ENCODE measurements at regions of chr1 and their contacts with region 1.

Region 1: GRCh38 chr1:170685166-170685565 is 21.2 kb downstream of the PRRX1 start:
- DNase-seq: no peak
- ATAC-seq: no peak
- H3K4me3 ChIP-seq: no peak overlapping the region
- H3K27ac ChIP-seq: no peak overlapping the region
- H3K4me1 ChIP-seq: peaks cover 5% of the 10 kb centered on the region; the same call in 1 of the 2 replicates
- H3K27me3 ChIP-seq: no peaks in the 10 kb centered on the region
- CTCF ChIP-seq: no peak

Region 2: DNA sequence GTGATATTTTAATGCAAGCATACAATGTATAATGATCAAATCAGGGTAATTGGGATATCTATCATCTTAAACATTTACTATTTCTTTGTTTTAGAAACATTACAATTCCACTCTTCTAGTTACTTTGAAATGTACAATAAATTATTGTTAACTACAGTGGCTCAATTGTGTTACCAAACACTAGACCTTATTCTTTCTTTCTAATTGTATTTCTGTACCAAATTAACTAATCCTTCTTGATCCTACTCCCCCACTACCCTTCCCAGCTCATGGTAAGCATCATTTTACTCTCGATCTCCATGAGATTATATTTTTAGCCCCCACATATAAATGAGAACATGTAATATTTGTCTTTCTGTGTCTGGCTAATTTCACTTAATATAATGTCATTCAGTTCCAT is 155.2 kb after region 1 on chr1:
- CTCF ChIA-PET with region 1: no interaction called
- POLR2A ChIA-PET with region 1: no interaction called
- in situ Hi-C with region 1: no loop called
- intact Hi-C with region 1: no loop called
- DNase-seq: no peak
- ATAC-seq: no peak
- H3K4me3 ChIP-seq: no peak overlapping the region
- H3K27ac ChIP-seq: no peak overlapping the region
- H3K4me1 ChIP-seq: no peaks in the 10 kb centered on the region
- H3K27me3 ChIP-seq: no peaks in the 10 kb centered on the region
- CTCF ChIP-seq: no peak

Region 3: DNA sequence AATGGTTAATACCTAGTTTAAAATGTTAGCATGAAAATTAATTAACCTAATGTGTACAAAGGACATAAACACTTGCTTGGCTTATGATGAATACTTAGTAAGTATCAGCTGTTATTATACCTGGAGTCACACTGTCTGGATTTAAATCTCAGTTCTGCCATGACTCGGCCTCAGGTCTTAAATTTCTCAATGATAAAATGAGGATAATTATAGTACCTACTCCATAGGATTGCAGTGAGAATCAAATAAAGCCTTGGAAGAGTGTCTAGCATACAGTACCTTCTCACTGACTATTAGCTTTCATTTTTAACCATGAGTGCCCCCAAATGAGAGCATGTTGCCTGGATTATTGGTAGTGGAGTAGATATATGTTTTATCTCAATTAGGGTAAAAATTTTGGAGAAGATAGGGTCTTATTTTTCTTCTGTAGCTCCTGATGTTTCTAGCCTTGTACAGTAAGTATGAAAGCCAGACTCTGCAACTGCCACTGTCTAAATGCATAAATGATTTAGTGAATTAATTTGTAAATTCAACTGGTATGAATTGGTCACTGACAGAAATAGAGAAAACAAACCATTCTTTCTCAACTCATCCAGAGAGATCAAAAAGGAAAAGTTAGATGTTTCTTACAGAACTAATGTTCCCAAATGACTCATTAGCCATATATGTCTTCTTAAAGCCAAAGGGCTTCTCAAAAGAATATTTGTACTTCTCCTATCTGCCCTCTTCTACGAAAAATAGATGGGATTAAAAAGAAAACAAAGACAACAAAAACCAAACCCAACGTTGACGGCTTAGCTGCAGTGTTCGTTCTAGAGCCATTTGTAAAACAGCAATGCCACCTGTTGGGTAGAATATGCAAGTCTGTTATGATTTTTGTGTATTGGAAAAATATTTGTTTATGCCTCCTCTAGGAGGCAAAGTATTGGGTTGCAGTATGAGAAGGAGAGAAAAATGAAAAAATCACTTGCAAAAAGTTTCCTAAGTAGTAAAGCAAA is 196.4 kb after region 1 on chr1:
- CTCF ChIA-PET with region 1: interaction called, 3 read pairs
- POLR2A ChIA-PET with region 1: no interaction called
- in situ Hi-C with region 1: no loop called
- intact Hi-C with region 1: loop called (anchors 5 kb)
- DNase-seq: peak; percentile 12
- ATAC-seq: no peak
- H3K4me3 ChIP-seq: no peak overlapping the region
- H3K27ac ChIP-seq: no peak overlapping the region
- H3K4me1 ChIP-seq: no peaks in the 10 kb centered on the region; the same call in 1 of the 2 replicates
- H3K27me3 ChIP-seq: no peaks in the 10 kb centered on the region
- CTCF ChIP-seq: peak; percentile 50; the same call in 1 of the 2 replicates

Region 4: GRCh38 chr1:170929835-170930554 is 244.8 kb after region 1 on chr1:
- CTCF ChIA-PET with region 1: no interaction called
- POLR2A ChIA-PET with region 1: no interaction called
- in situ Hi-C with region 1: no loop called
- intact Hi-C with region 1: loop called (anchors 2 kb)
- DNase-seq: peak; percentile 38
- ATAC-seq: peak; percentile 91
- H3K4me3 ChIP-seq: no peak overlapping the region
- H3K27ac ChIP-seq: no peak overlapping the region
- H3K4me1 ChIP-seq: no peaks in the 10 kb centered on the region
- H3K27me3 ChIP-seq: no peaks in the 10 kb centered on the region
- CTCF ChIP-seq: peak; percentile 81